H1 (cell line): ENCODE measurements at regions of chr17 and their contacts with region 1.

Region 1: GRCh38 chr17:43349142-43349541 is 49.7 kb upstream of the ARL4D start:
- DNase-seq: no peak
- H3K4me3 ChIP-seq: no peak overlapping the region
- H3K27ac ChIP-seq: no peak overlapping the region
- H3K4me1 ChIP-seq: peaks cover 0 to 10% (median 1%) of the 10 kb centered on the region in 4 experiments; a peak in 3 of 7 replicates
- H3K27me3 ChIP-seq: no peaks in the 10 kb centered on the region
- CTCF ChIP-seq: peak in 2 of 3 experiments; percentile 29 to 47; a peak in 2 of 4 replicates
- EP300 ChIP-seq: no peak
- POLR2A ChIP-seq: no peak
- RAD21 ChIP-seq: peak; percentile 35 to 49; a peak in 3 of 4 replicates

Region 2: DNA sequence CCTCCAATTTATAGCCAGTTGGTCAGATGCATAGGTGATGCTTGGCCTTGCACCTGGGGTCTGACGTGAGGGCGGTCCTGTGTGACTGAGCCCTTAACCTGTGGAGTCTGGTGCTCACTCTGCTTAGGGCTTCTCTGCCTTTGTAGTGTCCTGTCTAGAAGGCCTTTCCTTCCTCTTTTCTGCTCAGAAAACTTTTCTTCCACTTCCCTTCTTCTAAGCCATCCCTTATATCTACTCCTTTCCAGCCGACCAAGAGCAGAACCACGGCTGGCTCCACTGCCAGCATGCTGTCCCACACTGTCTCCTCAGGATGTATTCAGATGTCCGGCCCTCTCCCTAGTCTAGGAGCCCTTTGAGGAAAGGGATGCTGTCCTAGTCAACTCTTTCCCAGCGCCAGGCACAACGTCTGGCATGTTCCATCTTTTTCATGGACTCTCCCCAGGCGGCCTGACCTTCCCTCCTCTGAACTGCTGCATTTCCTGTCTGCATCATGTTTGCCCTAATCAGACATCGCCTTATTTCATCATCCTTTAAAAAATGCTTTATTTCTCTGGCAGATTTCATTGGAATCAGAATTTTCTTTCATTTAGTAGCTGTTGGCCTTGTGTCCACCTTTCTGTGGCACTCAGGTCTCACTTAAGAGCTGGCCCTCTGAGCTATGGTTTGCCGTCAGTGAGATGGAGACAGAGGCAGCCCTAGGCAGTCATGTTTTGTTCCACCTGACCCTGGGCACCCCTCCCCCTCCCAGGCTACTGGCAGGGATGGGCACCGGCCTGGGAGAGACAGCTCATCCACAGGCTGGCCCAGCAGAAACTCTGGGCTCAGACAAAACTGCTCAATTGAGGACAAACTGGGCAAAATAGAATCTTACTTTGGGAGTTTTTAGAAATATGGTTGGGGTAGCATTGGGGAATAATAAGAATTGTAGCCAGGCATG is 208.5 kb before region 1 on chr17:
- CTCF ChIA-PET with region 1: no interaction called
- POLR2A ChIA-PET with region 1: no interaction called
- DNase-seq: no peak
- H3K4me3 ChIP-seq: no peak overlapping the region
- H3K27ac ChIP-seq: no peak overlapping the region
- H3K4me1 ChIP-seq: no peaks in the 10 kb centered on the region; a peak in 1 of 7 replicates
- H3K27me3 ChIP-seq: no peaks in the 10 kb centered on the region
- CTCF ChIP-seq: no peak
- EP300 ChIP-seq: no peak
- POLR2A ChIP-seq: no peak
- RAD21 ChIP-seq: no peak

Region 3: GRCh38 chr17:43171586-43172487 is 177.3 kb before region 1 on chr17:
- CTCF ChIA-PET with region 1: no interaction called
- POLR2A ChIA-PET with region 1: no interaction called
- DNase-seq: no peak
- H3K4me3 ChIP-seq: peak overlapping the region; percentile 73 to 90 (median 82)
- H3K27ac ChIP-seq: peak overlapping the region; percentile 78
- H3K4me1 ChIP-seq: peaks cover 0 to 6% (median 2%) of the 10 kb centered on the region in 4 experiments; a peak in 4 of 7 replicates
- H3K27me3 ChIP-seq: no peaks in the 10 kb centered on the region
- CTCF ChIP-seq: peak in 1 of 3 experiments; percentile 13; a peak in 1 of 4 replicates
- EP300 ChIP-seq: no peak
- POLR2A ChIP-seq: no peak
- RAD21 ChIP-seq: peak in 1 of 2 experiments; percentile 10; a peak in 1 of 4 replicates

Region 4: DNA sequence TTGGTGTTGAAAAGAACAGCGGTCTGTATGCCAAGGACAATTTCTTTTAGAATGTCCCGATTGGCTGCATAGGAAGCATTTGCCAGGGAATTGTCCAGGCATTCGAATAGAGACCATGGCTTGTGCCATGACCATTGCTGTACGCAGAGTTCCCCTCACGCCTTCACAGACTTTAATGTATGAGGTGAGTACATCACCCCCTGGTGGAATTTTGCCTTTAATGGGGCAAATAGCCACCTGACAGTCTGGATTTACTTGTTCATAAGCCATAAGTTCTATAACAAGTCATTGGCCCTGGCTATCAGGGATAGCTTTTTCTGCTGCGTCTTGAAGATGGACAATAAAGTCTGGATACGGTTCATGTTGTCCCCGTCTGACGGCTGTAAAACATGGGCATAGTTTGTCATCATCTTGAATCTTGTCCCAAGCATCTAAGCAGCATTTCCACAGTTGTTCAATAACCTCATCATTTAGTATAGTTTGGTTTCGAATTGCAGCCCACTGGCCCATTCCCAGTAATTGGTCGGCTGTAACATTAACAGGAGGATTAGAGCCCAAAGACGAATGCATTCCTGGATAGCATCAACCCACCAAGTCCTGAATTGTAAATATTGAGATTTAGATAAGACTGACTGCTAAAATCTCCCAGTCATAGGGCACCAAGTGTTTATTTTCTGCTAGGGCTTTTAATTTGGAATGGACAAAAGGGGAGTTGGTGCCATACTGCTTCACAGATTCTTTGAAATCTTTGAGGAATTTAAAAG is 18.1 kb before region 1 on chr17:
- CTCF ChIA-PET with region 1: interaction called, 23 read pairs
- POLR2A ChIA-PET with region 1: interaction called, 4 read pairs
- DNase-seq: no peak
- H3K4me3 ChIP-seq: no peak overlapping the region
- H3K27ac ChIP-seq: no peak overlapping the region
- H3K4me1 ChIP-seq: peaks cover 0 to 2% (median 0%) of the 10 kb centered on the region in 4 experiments; a peak in 2 of 7 replicates
- H3K27me3 ChIP-seq: no peaks in the 10 kb centered on the region
- CTCF ChIP-seq: no peak
- EP300 ChIP-seq: no peak
- POLR2A ChIP-seq: no peak
- RAD21 ChIP-seq: peak in 1 of 2 experiments; percentile 22; a peak in 1 of 4 replicates

Region 5: DNA sequence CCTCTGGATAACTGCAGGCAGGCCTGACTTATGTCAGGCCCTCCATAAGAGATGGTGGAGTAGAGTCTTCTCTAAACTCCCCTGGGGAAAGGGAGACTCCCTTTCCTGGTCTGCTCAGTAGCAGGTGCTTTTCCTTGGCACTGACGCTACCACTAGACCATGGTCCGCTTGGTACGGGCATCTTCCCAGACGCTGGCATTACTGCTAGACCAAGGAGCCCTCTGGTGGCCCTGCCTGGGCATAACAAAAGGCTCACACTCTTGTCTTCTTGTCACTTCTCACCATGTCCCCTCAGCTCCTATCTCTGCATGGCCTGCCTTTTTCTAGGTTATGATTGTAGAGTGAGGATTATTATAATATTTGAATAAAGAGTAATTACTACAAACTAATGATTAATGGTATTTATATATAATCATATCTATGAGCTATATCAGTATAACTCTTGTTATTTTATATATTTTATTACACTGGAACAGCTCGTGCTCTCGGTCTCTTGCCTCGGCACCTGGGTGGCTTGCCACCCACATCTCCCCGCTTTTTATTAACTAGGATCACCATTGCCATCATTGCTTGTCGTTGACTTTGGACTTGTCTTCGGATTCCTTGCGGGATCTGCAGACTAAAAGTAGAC is 10.1 kb before region 1 on chr17:
- CTCF ChIA-PET with region 1: interaction called, 23 read pairs
- POLR2A ChIA-PET with region 1: interaction called, 3 read pairs
- DNase-seq: peak in 1 of 2 experiments; percentile 77
- H3K4me3 ChIP-seq: no peak overlapping the region
- H3K27ac ChIP-seq: no peak overlapping the region
- H3K4me1 ChIP-seq: peaks cover 6 to 7% (median 6%) of the 10 kb centered on the region in 4 experiments; a peak in 6 of 7 replicates
- H3K27me3 ChIP-seq: no peaks in the 10 kb centered on the region
- CTCF ChIP-seq: peak; percentile 62 to 66 (median 64)
- EP300 ChIP-seq: no peak
- POLR2A ChIP-seq: no peak
- RAD21 ChIP-seq: peak; percentile 70 to 71

Region 6: DNA sequence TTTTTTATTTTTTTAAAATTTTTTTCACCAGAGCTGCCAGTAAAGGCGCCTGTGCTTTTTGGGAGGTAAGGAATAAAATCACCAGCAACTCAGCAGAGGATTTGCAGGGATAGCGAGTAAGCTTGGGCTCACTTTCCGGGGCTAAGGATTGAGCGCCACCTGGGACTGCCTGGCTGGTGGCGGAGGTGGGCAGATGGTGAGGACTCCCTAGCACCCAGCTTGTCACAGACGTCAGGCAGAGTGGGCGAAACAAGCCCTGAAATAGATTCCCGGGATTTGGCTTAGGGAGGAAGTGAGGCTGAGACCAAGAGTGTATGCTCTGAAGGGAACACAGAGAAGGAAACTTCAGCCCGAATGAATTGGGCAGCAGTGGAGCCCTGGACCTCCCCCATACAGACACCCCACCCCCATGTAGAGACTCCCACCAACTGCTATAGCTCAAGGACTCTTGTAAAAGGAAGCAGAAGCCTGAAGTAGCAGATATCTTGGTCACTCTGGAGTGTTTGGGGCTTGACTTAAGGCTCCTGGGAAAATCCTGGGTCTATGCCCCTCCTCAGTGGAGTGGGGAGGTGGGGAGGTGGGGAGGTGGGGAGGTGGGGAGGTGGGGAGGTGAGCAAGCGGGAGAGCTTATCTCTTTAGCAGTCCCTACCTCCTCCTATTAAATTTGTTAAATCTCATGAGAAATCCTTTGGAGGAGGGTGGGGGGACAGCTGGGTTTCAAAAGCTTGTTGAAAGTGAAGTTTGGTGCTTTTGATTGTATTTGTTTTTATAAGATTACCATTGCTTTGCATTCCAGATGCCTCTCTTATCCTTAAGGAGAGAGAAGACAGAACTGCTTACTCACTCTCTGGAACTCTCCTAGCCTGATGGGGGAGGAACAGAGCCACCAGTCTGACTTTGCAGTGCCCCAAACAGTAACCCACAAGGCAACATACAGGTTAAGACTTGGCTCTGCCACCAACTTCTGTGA is 57.8 kb after region 1 on chr17:
- CTCF ChIA-PET with region 1: no interaction called
- POLR2A ChIA-PET with region 1: no interaction called
- DNase-seq: no peak
- H3K4me3 ChIP-seq: no peak overlapping the region
- H3K27ac ChIP-seq: no peak overlapping the region
- H3K4me1 ChIP-seq: peaks cover 0 to 6% (median 2%) of the 10 kb centered on the region in 4 experiments; a peak in 3 of 7 replicates
- H3K27me3 ChIP-seq: no peaks in the 10 kb centered on the region
- CTCF ChIP-seq: no peak
- EP300 ChIP-seq: no peak
- POLR2A ChIP-seq: no peak
- RAD21 ChIP-seq: no peak

Region 7: GRCh38 chr17:43442711-43443110 is 93.6 kb after region 1 on chr17:
- CTCF ChIA-PET with region 1: no interaction called
- POLR2A ChIA-PET with region 1: no interaction called
- DNase-seq: no peak
- H3K4me3 ChIP-seq: no peak overlapping the region
- H3K27ac ChIP-seq: no peak overlapping the region
- H3K4me1 ChIP-seq: peaks cover 0 to 2% (median 0%) of the 10 kb centered on the region in 4 experiments; a peak in 3 of 7 replicates
- H3K27me3 ChIP-seq: no peaks in the 10 kb centered on the region
- CTCF ChIP-seq: no peak
- EP300 ChIP-seq: no peak
- POLR2A ChIP-seq: no peak
- RAD21 ChIP-seq: no peak